Transverse colon (tissue), 4 donors: ENCODE measurements at regions of chr1 and their contacts with region 1.

Region 1: DNA sequence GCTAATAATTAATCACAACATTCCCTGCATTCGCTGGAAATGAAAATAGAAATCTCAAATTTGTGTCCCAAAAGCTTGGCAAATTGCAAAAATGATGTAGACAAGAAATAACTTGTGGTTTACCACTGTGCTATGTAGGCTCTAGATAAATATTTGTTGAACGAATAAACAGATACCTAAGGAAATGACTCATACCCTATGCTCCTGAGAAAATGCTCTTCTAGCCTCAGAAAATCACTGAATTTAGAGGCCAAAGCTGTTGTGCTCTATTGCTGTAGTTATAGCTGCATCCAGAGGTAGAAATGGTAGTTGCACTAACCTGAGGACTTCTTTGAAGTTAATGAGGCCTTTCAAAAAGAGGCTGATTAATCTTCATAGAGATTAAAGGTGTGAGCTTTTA is 142.0 kb upstream of the ZNHIT6 start:
- DNase-seq: no peak
- H3K4me3 ChIP-seq: no peak overlapping the region
- H3K27ac ChIP-seq: no peak overlapping the region
- H3K4me1 ChIP-seq: no peaks in the 10 kb centered on the region
- H3K27me3 ChIP-seq: no peaks in the 10 kb centered on the region
- CTCF ChIP-seq: no peak
- EP300 ChIP-seq: no peak
- POLR2A ChIP-seq: no peak

Region 2: GRCh38 chr1:85544689-85545215 is 305.5 kb before region 1 on chr1:
- in situ Hi-C with region 1: no loop called
- intact Hi-C with region 1: no loop called
- DNase-seq: no peak
- H3K4me3 ChIP-seq: no peak overlapping the region
- H3K27ac ChIP-seq: no peak overlapping the region
- H3K4me1 ChIP-seq: peaks cover 0 to 7% (median 0%) of the 10 kb centered on the region in 4 donors
- H3K27me3 ChIP-seq: no peaks in the 10 kb centered on the region
- CTCF ChIP-seq: no peak
- EP300 ChIP-seq: no peak
- POLR2A ChIP-seq: no peak

Region 3: DNA sequence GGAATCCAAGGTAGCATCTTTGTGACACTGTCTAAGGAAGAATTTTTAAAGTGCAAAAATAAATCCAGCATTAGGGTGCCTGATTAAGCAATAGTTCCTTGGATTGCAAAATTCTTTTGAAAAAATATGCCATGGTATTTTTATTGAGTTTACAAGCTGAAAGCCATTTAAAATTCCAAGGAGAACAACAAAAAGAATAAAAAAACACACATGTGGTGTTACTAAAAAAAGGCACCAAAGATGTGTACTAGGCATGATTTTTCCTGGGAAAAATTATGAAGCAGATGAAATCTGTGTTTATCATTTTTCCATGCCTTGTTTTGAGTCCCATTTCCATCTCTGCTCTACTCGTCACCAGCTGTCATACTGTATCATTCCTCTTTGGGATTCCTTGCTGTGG is 15.0 kb after region 1 on chr1:
- in situ Hi-C with region 1: no loop called
- intact Hi-C with region 1: loop called (anchors 1 kb)
- DNase-seq: no peak
- H3K4me3 ChIP-seq: no peak overlapping the region
- H3K27ac ChIP-seq: no peak overlapping the region
- H3K4me1 ChIP-seq: no peaks in the 10 kb centered on the region
- H3K27me3 ChIP-seq: no peaks in the 10 kb centered on the region
- CTCF ChIP-seq: no peak
- EP300 ChIP-seq: no peak
- POLR2A ChIP-seq: no peak